ENCODE measurements at regions of chr1 and their contacts with region 1.

Region 1: GRCh38 chr1:27662707-27663393 is 9.1 kb downstream of the IFI6 start:
- DNase-seq: peak; percentile 85 to 89 (median 87)
- H3K4me3 ChIP-seq: peak overlapping the region; percentile 18 to 49
- H3K4me3 Mint-ChIP-seq: peak overlapping the region; percentile 69 to 93 (median 84)
- H3K27ac ChIP-seq: peak overlapping the region; percentile 76
- H3K27ac Mint-ChIP-seq: peak overlapping the region; percentile 95 to 100 (median 98)
- H3K4me1 ChIP-seq: peaks cover 50% of the 10 kb centered on the region
- H3K4me1 Mint-ChIP-seq: peaks cover 41 to 50% (median 46%) of the 10 kb centered on the region in 4 donors
- H3K27me3 ChIP-seq: no peaks in the 10 kb centered on the region
- H3K27me3 Mint-ChIP-seq: no peaks in the 10 kb centered on the region

Region 2: GRCh38 chr1:27402349-27402754 is 260.5 kb before region 1 on chr1:
- CTCF ChIA-PET with region 1: interaction called, 8 read pairs
- POLR2A ChIA-PET with region 1: interaction called, 6 read pairs
- intact Hi-C with region 1: loop called (anchors 1 kb)
- DNase-seq: no peak
- H3K4me3 ChIP-seq: no peak overlapping the region
- H3K4me3 Mint-ChIP-seq: no peak overlapping the region
- H3K27ac ChIP-seq: no peak overlapping the region
- H3K27ac Mint-ChIP-seq: peak overlapping the region in 3 of 7 donors; percentile 3 to 79 (median 23)
- H3K4me1 ChIP-seq: no peaks in the 10 kb centered on the region
- H3K4me1 Mint-ChIP-seq: peaks cover 3 to 18% (median 9%) of the 10 kb centered on the region in 4 donors
- H3K27me3 ChIP-seq: no peaks in the 10 kb centered on the region
- H3K27me3 Mint-ChIP-seq: no peaks in the 10 kb centered on the region

Region 3: DNA sequence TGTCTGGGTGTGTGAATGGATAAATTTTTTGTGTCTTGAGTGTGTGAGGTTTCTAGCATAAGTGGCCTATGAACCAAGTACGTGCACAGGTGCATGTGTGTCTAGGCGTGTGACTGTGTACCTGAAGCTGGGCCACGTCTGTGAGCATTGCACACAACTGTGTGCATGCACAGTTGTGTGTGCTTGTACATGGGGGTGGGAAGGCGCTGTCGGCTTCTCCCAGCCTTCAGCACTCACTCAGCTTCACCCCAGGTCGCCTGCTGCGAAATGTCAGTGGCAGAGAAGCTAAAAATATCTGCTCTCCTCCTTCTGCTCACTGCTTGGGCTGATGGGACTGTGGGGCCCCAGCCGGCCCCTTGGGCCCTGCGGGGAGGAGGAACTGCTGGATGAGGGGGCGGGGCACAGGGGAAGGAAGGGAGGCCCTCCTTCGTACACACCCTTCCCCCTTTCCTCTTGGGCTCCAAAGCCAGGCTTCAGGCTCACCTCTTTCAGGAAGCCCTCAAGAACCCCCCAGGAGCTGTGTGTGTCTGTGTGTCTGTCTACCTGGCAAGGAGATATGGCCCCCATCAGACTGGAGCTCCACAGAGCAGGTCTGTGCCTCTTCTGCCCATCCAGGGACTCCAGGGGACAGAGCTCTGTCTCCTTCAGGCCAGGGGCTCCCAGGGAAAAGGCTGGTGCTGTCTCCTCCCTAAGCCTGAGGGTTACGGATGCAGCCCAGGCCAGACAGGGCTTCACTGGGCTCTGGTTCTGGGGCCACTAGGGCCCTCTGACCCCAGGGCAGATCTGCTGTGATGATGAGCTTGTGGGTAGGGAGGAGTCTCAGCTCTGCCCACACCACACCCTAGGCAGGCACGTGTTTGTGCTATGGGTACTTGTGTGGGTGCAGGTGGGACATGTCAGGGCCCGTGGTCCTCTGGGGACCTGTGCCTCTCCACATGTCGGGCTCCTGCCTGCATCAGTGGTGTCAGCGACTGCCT is 137.3 kb before region 1 on chr1:
- CTCF ChIA-PET with region 1: interaction called, 7 read pairs
- POLR2A ChIA-PET with region 1: interaction called, 18 read pairs
- intact Hi-C with region 1: no loop called
- DNase-seq: peak; percentile 28 to 54 (median 43)
- H3K4me3 ChIP-seq: peak overlapping the region; percentile 22 to 50
- H3K4me3 Mint-ChIP-seq: peak overlapping the region; percentile 36 to 92 (median 77)
- H3K27ac ChIP-seq: peak overlapping the region; percentile 62
- H3K27ac Mint-ChIP-seq: peak overlapping the region; percentile 77 to 96 (median 93)
- H3K4me1 ChIP-seq: peaks cover 81% of the 10 kb centered on the region
- H3K4me1 Mint-ChIP-seq: peaks cover 53 to 78% (median 66%) of the 10 kb centered on the region in 4 donors
- H3K27me3 ChIP-seq: no peaks in the 10 kb centered on the region
- H3K27me3 Mint-ChIP-seq: no peaks in the 10 kb centered on the region

Region 4: DNA sequence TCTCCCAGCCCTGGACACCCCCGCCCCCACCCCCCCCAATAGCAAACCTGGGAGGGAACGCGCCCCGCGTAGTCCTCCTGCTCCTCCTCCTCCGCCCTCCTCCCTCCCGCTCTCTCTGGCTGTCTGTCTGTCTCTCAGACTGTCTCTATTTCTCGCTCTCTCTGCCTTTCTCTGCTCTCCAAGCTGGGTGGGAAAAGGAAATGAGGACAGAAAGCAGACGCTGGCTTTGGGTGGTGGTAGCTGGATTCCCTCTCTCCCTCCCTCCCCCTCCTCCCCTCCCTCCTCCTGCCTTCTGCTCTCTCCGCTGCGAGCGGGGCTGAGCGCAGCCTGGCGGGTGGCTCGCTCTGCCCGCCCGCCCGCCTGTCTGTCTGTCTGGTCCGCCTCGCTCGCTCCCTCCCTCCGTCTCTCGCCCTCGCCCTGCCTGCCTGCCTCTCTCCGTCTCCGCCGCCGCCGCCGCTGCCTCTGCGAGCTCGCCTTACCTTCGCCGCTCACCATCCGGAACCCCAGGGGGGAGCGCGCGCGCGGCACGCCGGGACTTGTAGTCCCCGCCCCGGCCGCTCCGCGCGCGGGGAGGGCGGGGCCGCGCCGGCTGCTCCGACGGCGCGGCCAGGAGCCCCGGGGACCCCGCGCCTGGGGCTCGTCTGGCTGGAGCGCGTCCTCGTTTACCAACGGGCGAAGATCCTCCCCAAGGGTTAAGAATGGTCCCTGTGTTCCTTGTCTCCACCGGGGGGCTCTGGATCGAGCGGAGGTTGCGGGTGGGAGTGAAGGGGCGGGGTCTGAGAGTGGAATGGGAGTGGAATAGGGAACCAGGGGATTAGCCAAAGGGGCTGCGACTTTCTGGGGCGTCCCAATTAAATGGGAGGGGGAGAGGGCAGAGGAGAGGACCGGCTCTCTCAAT is 58.9 kb before region 1 on chr1 and contains the start of gene AHDC1:
- CTCF ChIA-PET with region 1: interaction called, 550 read pairs
- POLR2A ChIA-PET with region 1: interaction called, 237 read pairs
- intact Hi-C with region 1: loop called (anchors 1 kb)
- DNase-seq: peak; percentile 90 to 94 (median 91)
- H3K4me3 ChIP-seq: peak within 1 kb of the TSS; percentile 29 to 79
- H3K4me3 Mint-ChIP-seq: peak within 1 kb of the TSS; percentile 86 to 98 (median 92)
- H3K27ac ChIP-seq: peak within 1 kb of the TSS; percentile 63
- H3K27ac Mint-ChIP-seq: peak within 1 kb of the TSS; percentile 88 to 94 (median 92)
- H3K4me1 ChIP-seq: peaks cover 54% of the 10 kb centered on the region
- H3K4me1 Mint-ChIP-seq: peaks cover 16 to 66% (median 40%) of the 10 kb centered on the region in 4 donors
- H3K27me3 ChIP-seq: no peaks in the 10 kb centered on the region
- H3K27me3 Mint-ChIP-seq: no peaks in the 10 kb centered on the region
- total RNA-seq, gene AHDC1: 18.4 to 19.2 TPM

Region 5: GRCh38 chr1:27643701-27644625 is 18.9 kb before region 1 on chr1:
- CTCF ChIA-PET with region 1: interaction called, 111 read pairs
- POLR2A ChIA-PET with region 1: interaction called, 44 read pairs
- intact Hi-C with region 1: loop called (anchors 1 kb)
- DNase-seq: peak; percentile 67 to 74 (median 71)
- H3K4me3 ChIP-seq: no peak overlapping the region
- H3K4me3 Mint-ChIP-seq: peak overlapping the region in 1 of 8 donors; percentile 64
- H3K27ac ChIP-seq: no peak overlapping the region
- H3K27ac Mint-ChIP-seq: peak overlapping the region in 6 of 7 donors; percentile 47 to 90 (median 72)
- H3K4me1 ChIP-seq: peaks cover 12% of the 10 kb centered on the region
- H3K4me1 Mint-ChIP-seq: peaks cover 10 to 22% (median 18%) of the 10 kb centered on the region in 4 donors
- H3K27me3 ChIP-seq: no peaks in the 10 kb centered on the region
- H3K27me3 Mint-ChIP-seq: no peaks in the 10 kb centered on the region

Region 6: DNA sequence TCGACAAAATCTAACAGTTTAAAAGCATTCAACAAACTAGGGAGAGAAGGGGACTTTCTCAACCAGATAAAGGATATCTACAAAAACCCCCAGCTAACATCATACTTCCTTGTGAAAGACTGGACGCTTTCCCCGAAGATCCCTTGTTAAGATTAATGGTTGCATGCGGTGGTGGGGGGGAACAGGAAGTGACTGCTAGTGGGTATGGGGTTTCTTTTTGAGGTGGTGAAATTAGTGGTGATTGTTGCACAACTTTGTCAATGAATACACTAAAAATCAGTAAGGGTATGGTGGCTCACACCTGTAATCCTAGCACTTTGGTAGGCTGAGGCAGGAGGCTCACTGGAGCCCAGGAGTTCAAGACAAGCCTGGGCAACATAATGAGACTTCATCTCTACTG is 452.4 kb after region 1 on chr1:
- CTCF ChIA-PET with region 1: no interaction called
- POLR2A ChIA-PET with region 1: no interaction called
- intact Hi-C with region 1: no loop called
- DNase-seq: peak; percentile 25 to 68 (median 32)
- H3K4me3 ChIP-seq: no peak overlapping the region
- H3K4me3 Mint-ChIP-seq: peak overlapping the region in 3 of 8 donors; percentile 3 to 32 (median 17)
- H3K27ac ChIP-seq: no peak overlapping the region
- H3K27ac Mint-ChIP-seq: peak overlapping the region in 4 of 7 donors; percentile 9 to 60 (median 35)
- H3K4me1 ChIP-seq: peaks cover 10% of the 10 kb centered on the region
- H3K4me1 Mint-ChIP-seq: peaks cover 6 to 11% (median 7%) of the 10 kb centered on the region in 4 donors
- H3K27me3 ChIP-seq: no peaks in the 10 kb centered on the region
- H3K27me3 Mint-ChIP-seq: no peaks in the 10 kb centered on the region

Measured in CD4-positive, alpha-beta memory T cell (primary cell).